BJ (cell line): ENCODE measurements at regions of chr12 and their contacts with region 1.

Region 1: DNA sequence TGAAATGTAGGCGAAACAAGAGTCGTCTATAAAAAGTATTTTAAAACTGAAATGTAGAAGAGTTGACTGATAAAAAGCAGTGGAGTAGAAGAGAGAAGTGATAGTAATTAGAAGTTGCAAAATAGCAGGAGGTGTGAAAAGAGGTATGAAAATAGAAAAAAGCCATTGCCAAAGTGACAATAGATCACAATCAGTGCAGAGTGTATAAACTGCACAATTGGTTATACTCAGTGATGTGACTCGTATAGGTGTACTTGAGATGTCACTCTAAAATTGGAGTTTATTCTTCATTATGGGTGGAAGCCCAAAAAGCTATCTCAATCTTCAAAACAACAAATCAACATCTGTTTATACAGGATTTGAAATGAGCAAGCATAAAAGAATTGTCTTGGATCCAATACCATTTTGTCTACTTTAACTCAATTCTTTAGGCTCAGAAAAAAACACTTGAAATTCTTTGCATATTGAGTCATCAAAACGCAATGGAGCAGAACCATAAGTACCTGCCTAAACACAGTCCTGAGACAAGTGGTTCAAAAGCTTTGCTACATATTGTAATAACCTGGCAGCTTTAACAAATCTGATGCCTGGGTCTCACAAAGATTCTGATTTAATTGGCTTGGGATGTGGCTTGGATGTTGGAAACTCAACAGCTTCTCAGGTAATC is 8.8 kb downstream of the IKBIP start:
- DNase-seq: no peak
- H3K4me3 ChIP-seq: no peak overlapping the region
- H3K27me3 ChIP-seq: no peaks in the 10 kb centered on the region
- CTCF ChIP-seq: no peak

Region 2: GRCh38 chr12:98686603-98687002 is 50.8 kb after region 1 on chr12:
- CTCF ChIA-PET with region 1: no interaction called
- POLR2A ChIA-PET with region 1: interaction called, 16 read pairs
- DNase-seq: no peak
- H3K4me3 ChIP-seq: no peak overlapping the region
- H3K27me3 ChIP-seq: no peaks in the 10 kb centered on the region
- CTCF ChIP-seq: no peak